BJ (cell line): ENCODE measurements at regions of chr20 and their contacts with region 1.

Region 1: DNA sequence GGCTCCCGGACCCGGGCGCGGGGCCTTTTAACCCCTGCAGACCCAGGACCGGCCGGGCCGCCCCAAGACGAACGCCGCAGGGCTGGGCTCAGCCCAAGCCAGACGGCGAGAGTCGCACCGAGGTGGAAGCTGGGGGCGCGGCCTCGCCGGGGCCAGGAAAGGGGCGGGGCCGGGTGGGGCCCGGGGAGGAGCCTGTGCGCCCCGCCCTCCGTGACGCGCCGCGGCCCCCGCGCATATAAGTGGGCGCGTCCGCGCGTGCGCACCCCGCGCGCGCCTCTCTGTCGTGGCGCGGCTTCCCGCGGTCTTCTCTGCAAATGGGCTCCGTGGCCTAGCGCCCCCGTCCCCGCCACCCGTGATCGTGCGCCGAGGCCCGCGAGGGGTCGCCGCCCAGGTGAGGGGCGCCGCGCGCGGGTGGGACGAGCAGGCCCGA is at the start of gene PPDPF:
- DNase-seq: no peak
- H3K4me3 ChIP-seq: peak within 1 kb of the TSS; percentile 93
- H3K27me3 ChIP-seq: no peaks in the 10 kb centered on the region
- CTCF ChIP-seq: no peak
- polyA plus RNA-seq, gene PPDPF: 16.5 and 26.9 TPM in 2 replicates

Region 2: DNA sequence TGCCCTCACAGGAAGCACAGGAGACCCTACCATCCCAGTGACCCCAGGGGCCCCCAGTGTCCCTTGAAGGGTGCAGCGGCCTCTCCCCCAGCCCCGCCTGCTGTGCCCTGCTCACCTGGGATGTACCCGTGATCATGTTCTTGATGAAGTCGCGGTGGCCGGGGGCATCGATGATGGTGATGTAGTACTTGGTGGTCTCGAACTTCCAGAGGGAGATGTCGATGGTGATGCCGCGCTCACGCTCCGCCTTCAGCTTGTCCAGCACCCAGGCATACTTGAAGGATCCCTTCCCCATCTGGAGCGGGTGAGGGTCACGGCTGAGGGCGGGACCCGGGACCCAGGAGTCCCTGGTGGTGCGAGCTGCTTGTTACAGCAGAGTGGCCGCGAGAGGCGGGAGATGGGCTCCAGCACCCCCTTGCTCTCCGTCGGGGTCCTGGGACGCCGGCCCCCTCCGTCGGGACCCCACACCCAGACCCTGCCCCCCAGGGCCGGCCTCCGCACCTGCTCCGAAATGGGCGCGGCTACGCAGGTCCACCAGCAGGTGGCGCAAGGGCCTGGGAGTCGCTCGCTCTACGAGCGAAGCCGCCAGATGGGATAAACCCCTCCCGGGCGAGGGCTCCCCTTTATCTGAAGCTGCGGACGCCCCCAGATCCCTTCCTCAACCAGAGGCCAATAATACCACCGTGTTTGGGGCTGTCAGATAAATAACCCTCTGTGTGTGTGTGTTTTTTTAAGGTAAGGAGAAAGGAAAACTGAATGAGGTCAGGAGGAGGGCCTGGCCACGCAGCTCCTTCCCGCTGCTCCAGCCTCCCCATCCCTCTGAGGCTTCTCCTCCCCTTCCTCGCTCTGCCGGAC is 24.6 kb before region 1 on chr20:
- CTCF ChIA-PET with region 1: interaction called, 13 read pairs
- POLR2A ChIA-PET with region 1: no interaction called
- DNase-seq: no peak
- H3K4me3 ChIP-seq: no peak overlapping the region
- H3K27me3 ChIP-seq: peaks cover 3% of the 10 kb centered on the region
- CTCF ChIP-seq: peak; percentile 95